RWPE1 (cell line): ENCODE measurements at regions of chr2 and their contacts with region 1.

Region 1: DNA sequence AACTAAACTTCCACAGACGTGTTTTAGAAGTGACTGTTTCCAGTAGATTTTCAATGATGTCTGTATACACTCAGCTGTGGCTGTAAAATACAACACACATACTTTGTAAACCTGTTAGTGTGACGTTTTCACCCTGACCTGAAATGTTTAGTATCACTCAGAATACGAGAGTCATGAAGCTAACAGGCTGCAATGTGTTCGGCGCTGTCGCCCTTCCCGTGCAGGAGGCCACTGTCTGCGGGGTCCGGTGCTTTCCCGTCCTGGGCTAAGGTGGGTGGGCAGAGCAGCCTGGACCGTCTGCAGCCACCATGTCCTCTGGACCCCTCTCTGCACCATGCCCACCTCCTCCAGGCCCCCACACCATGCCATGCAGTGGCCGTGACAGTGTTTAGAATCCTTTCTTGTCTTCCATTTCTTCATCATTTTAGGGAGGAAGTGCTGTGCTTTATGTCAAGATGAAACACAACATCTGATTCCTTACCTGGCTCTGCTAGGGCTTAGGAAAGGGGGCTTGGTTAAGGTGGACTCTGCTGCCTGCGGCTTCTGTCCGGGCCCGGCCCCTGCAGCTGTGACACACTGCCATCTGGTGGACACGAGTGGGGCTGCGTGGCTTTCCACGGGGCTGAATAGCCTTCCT is 53.8 kb upstream of the RBM44 start:
- DNase-seq: peak; percentile 79
- H3K27ac ChIP-seq: peak overlapping the region; percentile 59
- CTCF ChIP-seq: peak; percentile 98

Region 2: DNA sequence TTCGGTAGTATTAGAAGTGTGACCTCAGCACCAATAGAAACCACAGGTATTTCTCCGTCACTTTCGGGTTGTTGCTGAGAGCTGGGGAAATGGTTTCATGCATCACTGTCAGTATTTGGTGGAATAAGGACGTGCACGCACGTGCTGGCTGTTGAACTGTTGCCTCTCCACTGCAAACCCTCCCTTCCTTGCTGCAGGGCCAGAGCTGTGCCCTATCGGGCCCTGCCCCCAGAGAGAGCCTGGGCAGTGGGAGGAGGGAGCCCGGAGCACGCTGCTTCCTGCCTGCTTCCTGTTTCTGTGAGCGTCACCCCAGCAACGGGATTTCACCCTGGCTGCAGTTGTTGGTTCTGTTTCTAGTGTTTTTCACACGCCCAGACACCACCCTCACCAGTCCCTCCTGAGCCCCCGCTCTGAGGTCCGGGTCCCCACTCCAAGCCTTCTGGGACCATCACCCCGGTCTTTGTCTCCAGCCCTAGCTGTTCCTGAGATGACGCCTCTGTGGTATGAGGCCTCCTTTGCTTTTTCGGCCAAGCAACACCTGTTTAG is 69.9 kb before region 1 on chr2:
- CTCF ChIA-PET with region 1: interaction called, 87 read pairs
- POLR2A ChIA-PET with region 1: no interaction called
- DNase-seq: peak; percentile 75
- H3K27ac ChIP-seq: peak overlapping the region; percentile 85
- CTCF ChIP-seq: no peak

Region 3: DNA sequence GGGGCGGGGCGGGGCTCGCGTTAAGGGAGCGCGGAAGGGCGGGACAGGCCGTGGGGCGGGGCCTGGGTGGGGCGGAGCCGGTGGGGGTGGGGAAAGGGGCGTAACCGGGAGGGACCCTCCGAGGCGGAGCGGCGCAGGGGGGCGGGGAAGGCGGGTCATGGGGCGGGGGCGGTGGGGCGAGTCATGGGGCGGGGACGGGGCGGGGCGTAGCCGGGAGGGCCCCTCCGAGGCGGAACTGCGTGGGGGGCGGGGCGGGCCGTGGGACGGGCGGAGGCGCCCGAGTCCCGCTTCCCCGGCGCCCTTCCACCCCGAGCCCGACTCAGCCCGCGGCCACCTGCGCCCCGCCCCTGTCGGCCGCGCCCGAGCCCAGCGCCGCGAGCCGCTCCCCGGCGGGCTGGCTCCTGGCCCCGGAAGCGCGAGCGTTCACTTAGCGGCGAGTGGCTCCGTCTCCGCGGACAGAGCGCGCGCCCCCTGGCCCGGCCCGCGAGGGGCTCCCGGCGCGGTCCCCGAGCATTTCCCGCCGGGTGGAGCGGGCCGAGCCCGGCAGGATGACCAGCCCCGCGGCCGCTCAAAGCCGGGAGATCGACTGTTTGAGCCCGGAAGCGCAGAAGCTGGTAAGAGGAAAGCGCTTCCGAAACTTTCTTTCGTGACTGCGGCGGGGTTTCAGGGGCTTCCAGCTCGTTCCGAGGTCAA is 52.7 kb before region 1 on chr2:
- CTCF ChIA-PET with region 1: interaction called, 12 read pairs
- POLR2A ChIA-PET with region 1: no interaction called
- DNase-seq: peak; percentile 96
- H3K27ac ChIP-seq: peak overlapping the region; percentile 98
- CTCF ChIP-seq: no peak

Region 4: GRCh38 chr2:237833546-237833945 is 88.8 kb after region 1 on chr2:
- CTCF ChIA-PET with region 1: no interaction called
- POLR2A ChIA-PET with region 1: no interaction called
- DNase-seq: no peak
- H3K27ac ChIP-seq: no peak overlapping the region
- CTCF ChIP-seq: no peak

Region 5: GRCh38 chr2:238216651-238217184 is 472.0 kb after region 1 on chr2:
- CTCF ChIA-PET with region 1: no interaction called
- POLR2A ChIA-PET with region 1: no interaction called
- DNase-seq: no peak
- H3K27ac ChIP-seq: peak overlapping the region; percentile 7; the same call in 1 of the 2 replicates
- CTCF ChIP-seq: no peak